ENCODE measurements at regions of chr12 and their contacts with region 1.

Region 1: DNA sequence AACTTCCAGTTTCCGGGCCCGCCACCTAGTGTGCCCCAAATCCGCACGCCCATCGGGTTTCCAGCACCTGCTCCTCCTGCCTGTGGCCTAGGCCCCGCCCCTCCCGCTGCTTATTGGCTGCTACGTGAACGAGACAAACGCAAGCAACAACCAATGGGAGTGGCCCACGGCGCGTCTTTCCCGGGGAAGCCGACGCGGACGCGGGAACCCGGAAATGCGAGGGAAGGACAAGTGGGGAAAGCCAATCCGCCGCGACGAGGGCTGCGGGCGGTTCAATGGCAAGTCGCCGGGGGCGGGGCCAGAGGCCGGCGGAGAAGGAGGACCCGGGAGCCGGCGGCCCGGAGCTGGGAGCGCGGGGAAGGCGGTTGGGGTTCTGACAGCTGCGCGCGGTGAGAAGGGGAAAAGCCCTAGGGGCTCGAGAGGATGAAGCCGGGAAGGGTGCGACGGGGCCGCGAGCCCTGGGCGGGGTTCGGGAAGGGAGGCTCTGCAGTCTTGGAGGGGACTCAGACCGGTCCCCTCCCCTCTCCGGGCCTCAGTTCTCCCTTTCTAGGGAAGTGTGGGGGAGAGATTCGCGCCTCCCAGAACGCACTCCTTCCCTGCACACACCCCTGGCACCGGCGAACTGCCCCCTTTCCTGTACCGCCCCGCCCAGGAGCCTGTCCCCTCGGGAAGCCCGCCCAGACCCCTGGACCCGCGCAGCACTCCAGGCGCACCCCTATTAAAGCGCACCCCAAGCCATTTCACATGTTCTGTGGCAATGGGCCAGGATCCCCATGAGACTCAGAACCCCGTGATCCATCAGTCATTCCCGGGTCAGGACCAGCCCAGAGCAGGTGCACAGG is at the start of gene FICD:
- DNase-seq: peak; percentile 99
- H3K4me3 ChIP-seq: peak within 1 kb of the TSS; percentile 77
- H3K4me3 Mint-ChIP-seq: peak within 1 kb of the TSS; percentile 82
- H3K27ac Mint-ChIP-seq: peak within 1 kb of the TSS; percentile 89
- H3K4me1 ChIP-seq: no peaks in the 10 kb centered on the region
- H3K4me1 Mint-ChIP-seq: peaks cover 18% of the 10 kb centered on the region
- H3K27me3 ChIP-seq: no peaks in the 10 kb centered on the region
- H3K27me3 Mint-ChIP-seq: peaks cover 2% of the 10 kb centered on the region
- CTCF ChIP-seq: no peak
- total RNA-seq, gene FICD: 2.8 and 3.6 TPM in 2 replicates

Region 2: DNA sequence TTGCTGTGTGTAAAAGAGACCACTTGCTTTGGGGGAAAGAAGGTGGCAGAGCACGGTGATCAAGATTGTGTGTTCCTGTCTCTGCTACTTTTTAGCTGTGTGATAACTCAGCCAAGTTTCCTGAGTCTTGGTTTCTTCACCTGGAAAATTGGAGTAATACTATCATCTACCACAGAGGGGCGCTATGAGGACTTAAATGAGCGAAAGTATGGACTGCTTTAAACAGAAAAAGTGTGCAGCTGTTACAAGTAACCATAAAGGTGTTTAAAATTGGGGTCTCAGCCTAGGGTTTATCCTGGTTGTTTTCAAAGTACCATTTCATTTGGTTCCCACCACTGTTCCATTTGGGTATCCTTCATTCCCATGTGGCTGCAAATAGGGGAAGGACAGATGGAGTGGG is 452.0 kb before region 1 on chr12:
- CTCF ChIA-PET with region 1: no interaction called
- POLR2A ChIA-PET with region 1: no interaction called
- intact Hi-C with region 1: loop called (anchors 10 kb)
- DNase-seq: peak in 1 of 2 experiments; percentile 5
- H3K4me3 ChIP-seq: no peak overlapping the region
- H3K4me3 Mint-ChIP-seq: no peak overlapping the region
- H3K27ac Mint-ChIP-seq: no peak overlapping the region
- H3K4me1 ChIP-seq: no peaks in the 10 kb centered on the region
- H3K4me1 Mint-ChIP-seq: no peaks in the 10 kb centered on the region
- H3K27me3 ChIP-seq: no peaks in the 10 kb centered on the region
- H3K27me3 Mint-ChIP-seq: peaks cover 3% of the 10 kb centered on the region
- CTCF ChIP-seq: no peak

Region 3: GRCh38 chr12:108457006-108457733 is 58.0 kb before region 1 on chr12:
- CTCF ChIA-PET with region 1: interaction called, 4 read pairs
- POLR2A ChIA-PET with region 1: no interaction called
- intact Hi-C with region 1: loop called (anchors 1 kb)
- DNase-seq: peak; percentile 47 to 62
- H3K4me3 ChIP-seq: no peak overlapping the region
- H3K4me3 Mint-ChIP-seq: no peak overlapping the region
- H3K27ac Mint-ChIP-seq: no peak overlapping the region
- H3K4me1 ChIP-seq: no peaks in the 10 kb centered on the region
- H3K4me1 Mint-ChIP-seq: no peaks in the 10 kb centered on the region
- H3K27me3 ChIP-seq: no peaks in the 10 kb centered on the region
- H3K27me3 Mint-ChIP-seq: peaks cover 8% of the 10 kb centered on the region
- CTCF ChIP-seq: peak; percentile 51 to 71

Measured in Caco-2 (cell line).